HCT116 (cell line): ENCODE measurements at regions of chr1 and their contacts with region 1.

Region 1: GRCh38 chr1:111045033-111045722 is 81.5 kb upstream of the LRIF1 start:
- DNase-seq: no peak
- ATAC-seq: no peak
- H3K4me3 ChIP-seq: no peak overlapping the region
- H3K27ac ChIP-seq: no peak overlapping the region
- H3K4me1 ChIP-seq: no peaks in the 10 kb centered on the region
- H3K27me3 ChIP-seq: 0 out of 2 replicates have a peak, but pooled peaks cover 8% of the 10 kb centered on the region
- CTCF ChIP-seq: no peak
- POLR2A ChIP-seq: no peak
- RAD21 ChIP-seq: no peak

Region 2: GRCh38 chr1:110433803-110434202 is 611.4 kb before region 1 on chr1:
- CTCF ChIA-PET with region 1: no interaction called
- POLR2A ChIA-PET with region 1: no interaction called
- RAD21 ChIA-PET with region 1: no interaction called
- intact Hi-C with region 1: no loop called
- DNase-seq: peak; percentile 51
- ATAC-seq: peak; percentile 99
- H3K4me3 ChIP-seq: no peak overlapping the region
- H3K27ac ChIP-seq: no peak overlapping the region
- H3K4me1 ChIP-seq: peaks cover 24 to 39% of the 10 kb centered on the region in 2 experiments
- H3K27me3 ChIP-seq: 0 out of 2 replicates have a peak, but pooled peaks cover 6% of the 10 kb centered on the region
- CTCF ChIP-seq: peak in 2 of 3 experiments; percentile 33 to 40; a peak in 3 of 6 replicates
- POLR2A ChIP-seq: no peak
- RAD21 ChIP-seq: peak; percentile 33; the same call in 1 of the 2 replicates

Region 3: GRCh38 chr1:110990536-110990935 is 54.6 kb before region 1 on chr1:
- CTCF ChIA-PET with region 1: interaction called, 3 read pairs
- POLR2A ChIA-PET with region 1: no interaction called
- RAD21 ChIA-PET with region 1: no interaction called
- intact Hi-C with region 1: loop called (anchors 5 kb)
- DNase-seq: no peak
- ATAC-seq: no peak
- H3K4me3 ChIP-seq: no peak overlapping the region
- H3K27ac ChIP-seq: no peak overlapping the region
- H3K4me1 ChIP-seq: no peaks in the 10 kb centered on the region
- H3K27me3 ChIP-seq: peaks cover 23% of the 10 kb centered on the region
- CTCF ChIP-seq: no peak
- POLR2A ChIP-seq: no peak
- RAD21 ChIP-seq: no peak